Activated naive CD4-positive, alpha-beta T cell treated with anti-CD3 and anti-CD28 coated beads, Interleukin-2, amount 10 ng/mL, durations not matched to agents 7 days and 5 days (primary cell): ENCODE measurements at regions of chr1 and their contacts with region 1.

Region 1: DNA sequence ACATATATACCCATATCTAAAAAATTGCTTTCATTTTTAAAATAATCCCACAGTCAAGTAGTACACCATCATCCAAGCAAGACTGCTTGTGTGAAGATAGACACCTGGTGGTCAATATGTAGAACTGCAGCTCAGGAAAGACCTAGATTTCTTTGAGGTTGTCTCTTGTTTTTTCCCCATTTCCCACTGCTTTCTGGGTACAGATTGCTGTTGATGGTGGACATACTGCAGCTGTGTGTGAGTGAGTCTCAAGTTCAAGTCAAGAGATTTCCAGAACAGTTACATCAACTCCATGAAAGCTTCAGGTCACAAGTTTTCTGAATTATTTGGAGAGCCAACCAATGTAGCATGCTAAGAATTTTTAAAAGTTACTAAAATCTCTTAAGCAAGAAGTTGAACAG is 306.4 kb downstream of the DUSP10 start:
- DNase-seq: no peak
- H3K4me3 Mint-ChIP-seq: no peak overlapping the region
- H3K27ac Mint-ChIP-seq: no peak overlapping the region
- H3K4me1 Mint-ChIP-seq: peaks cover 21% of the 10 kb centered on the region
- H3K27me3 Mint-ChIP-seq: peaks cover 6% of the 10 kb centered on the region

Region 2: GRCh38 chr1:221263831-221264767 is 171.4 kb before region 1 on chr1:
- CTCF ChIA-PET with region 1: interaction called, 16 read pairs
- DNase-seq: peak; percentile 48
- H3K4me3 Mint-ChIP-seq: no peak overlapping the region
- H3K27ac Mint-ChIP-seq: no peak overlapping the region
- H3K4me1 Mint-ChIP-seq: no peaks in the 10 kb centered on the region
- H3K27me3 Mint-ChIP-seq: no peaks in the 10 kb centered on the region

Region 3: GRCh38 chr1:221478050-221478949 is 42.8 kb after region 1 on chr1:
- CTCF ChIA-PET with region 1: no interaction called
- DNase-seq: peak; percentile 64
- H3K4me3 Mint-ChIP-seq: no peak overlapping the region
- H3K27ac Mint-ChIP-seq: no peak overlapping the region
- H3K4me1 Mint-ChIP-seq: no peaks in the 10 kb centered on the region
- H3K27me3 Mint-ChIP-seq: peaks cover 8% of the 10 kb centered on the region

Region 4: GRCh38 chr1:222073307-222073995 is 637.9 kb after region 1 on chr1:
- CTCF ChIA-PET with region 1: no interaction called
- DNase-seq: no peak
- H3K4me3 Mint-ChIP-seq: no peak overlapping the region
- H3K27ac Mint-ChIP-seq: no peak overlapping the region
- H3K4me1 Mint-ChIP-seq: no peaks in the 10 kb centered on the region
- H3K27me3 Mint-ChIP-seq: no peaks in the 10 kb centered on the region